B cell (primary cell): ENCODE measurements at regions of chrX and their contacts with region 1.

Region 1: DNA sequence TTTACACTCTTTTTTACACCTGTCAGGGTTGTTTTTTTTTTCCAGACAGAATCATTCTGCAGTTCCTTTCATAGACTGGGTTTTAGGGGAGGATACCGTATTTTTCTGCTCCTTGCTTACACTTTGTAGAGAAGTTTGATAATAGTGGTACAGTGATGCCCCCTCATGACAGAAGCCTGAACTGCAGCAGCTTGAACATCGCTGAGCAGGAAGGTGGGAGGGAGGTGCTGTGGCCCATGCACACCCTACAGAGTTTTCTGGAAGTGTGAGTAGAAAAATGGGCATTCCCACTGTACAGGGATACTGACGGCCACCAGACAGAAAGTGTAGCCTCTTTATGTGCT is 54.5 kb downstream of the RAB40A start:
- DNase-seq: peak; percentile 74
- ATAC-seq: peak; percentile 92
- H3K4me3 ChIP-seq: peak overlapping the region in 4 of 5 experiments; percentile 33 to 69 (median 48)
- H3K4me3 Mint-ChIP-seq: peak overlapping the region; percentile 90
- H3K27ac ChIP-seq: no peak overlapping the region
- H3K27ac Mint-ChIP-seq: no peak overlapping the region
- H3K4me1 ChIP-seq: peaks cover 0 to 3% of the 10 kb centered on the region in 2 donors
- H3K4me1 Mint-ChIP-seq: peaks cover 6% of the 10 kb centered on the region
- H3K27me3 ChIP-seq: peaks cover 0 to 10% (median 0%) of the 10 kb centered on the region in 4 experiments
- H3K27me3 Mint-ChIP-seq: peaks cover 5% of the 10 kb centered on the region
- CTCF ChIP-seq: peak; percentile 66

Region 2: GRCh38 chrX:102950908-102951866 is 513.6 kb before region 1 on chrX:
- CTCF ChIA-PET with region 1: no interaction called
- POLR2A ChIA-PET with region 1: no interaction called
- intact Hi-C with region 1: loop called (anchors 5 kb)
- DNase-seq: peak; percentile 54
- ATAC-seq: peak; percentile 70
- H3K4me3 ChIP-seq: peak overlapping the region in 2 of 5 experiments; percentile 2 to 18
- H3K4me3 Mint-ChIP-seq: peak overlapping the region; percentile 77
- H3K27ac ChIP-seq: no peak overlapping the region
- H3K27ac Mint-ChIP-seq: no peak overlapping the region
- H3K4me1 ChIP-seq: peaks cover 0 to 3% of the 10 kb centered on the region in 2 donors
- H3K4me1 Mint-ChIP-seq: peaks cover 6% of the 10 kb centered on the region
- H3K27me3 ChIP-seq: no peaks in the 10 kb centered on the region
- H3K27me3 Mint-ChIP-seq: no peaks in the 10 kb centered on the region
- CTCF ChIP-seq: peak; percentile 61

Region 3: DNA sequence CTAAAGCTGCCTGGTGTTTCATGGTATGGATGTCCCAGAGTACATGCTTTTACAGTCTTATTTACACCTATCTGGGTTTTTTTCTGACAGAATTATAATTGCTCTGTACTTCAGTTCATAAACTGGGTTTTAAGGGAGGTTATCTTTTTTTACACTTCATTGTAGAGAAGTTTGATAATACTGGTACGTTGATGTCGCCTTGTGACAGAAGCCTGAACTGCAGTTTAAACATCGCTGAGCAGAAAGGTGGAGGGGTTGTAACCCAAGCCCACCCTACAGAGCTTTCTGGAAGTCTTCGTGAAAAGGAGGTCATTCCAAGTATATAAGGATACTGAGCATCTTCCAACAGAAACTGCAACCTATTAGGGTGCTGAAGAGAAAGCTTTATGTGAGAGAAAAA is 447.2 kb before region 1 on chrX:
- CTCF ChIA-PET with region 1: no interaction called
- POLR2A ChIA-PET with region 1: no interaction called
- intact Hi-C with region 1: no loop called
- DNase-seq: no peak
- ATAC-seq: no peak
- H3K4me3 ChIP-seq: no peak overlapping the region
- H3K4me3 Mint-ChIP-seq: no peak overlapping the region
- H3K27ac ChIP-seq: no peak overlapping the region
- H3K27ac Mint-ChIP-seq: no peak overlapping the region
- H3K4me1 ChIP-seq: no peaks in the 10 kb centered on the region
- H3K4me1 Mint-ChIP-seq: no peaks in the 10 kb centered on the region
- H3K27me3 ChIP-seq: no peaks in the 10 kb centered on the region
- H3K27me3 Mint-ChIP-seq: no peaks in the 10 kb centered on the region
- CTCF ChIP-seq: no peak

Region 4: DNA sequence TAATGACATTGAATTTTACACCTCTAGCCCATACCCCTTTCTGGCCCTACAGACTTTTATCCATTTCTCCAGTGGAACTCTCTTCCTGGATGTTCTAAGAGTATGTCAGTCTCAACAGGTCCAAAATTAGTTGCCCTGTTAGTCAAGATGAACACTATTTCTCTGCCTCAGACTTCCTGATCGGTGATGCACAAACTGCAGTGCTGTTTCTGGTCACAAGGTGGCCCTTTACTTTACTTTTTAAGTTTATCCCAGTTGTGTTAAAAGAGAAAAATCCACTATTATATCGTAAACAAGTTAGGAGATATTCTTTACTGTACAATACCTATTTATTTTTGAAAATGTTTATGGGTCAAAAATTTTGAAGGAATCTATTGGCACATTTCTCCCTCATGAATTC is 121.6 kb before region 1 on chrX:
- CTCF ChIA-PET with region 1: interaction called, 6 read pairs
- POLR2A ChIA-PET with region 1: no interaction called
- intact Hi-C with region 1: loop called (anchors 1 kb)
- DNase-seq: peak; percentile 35
- ATAC-seq: peak; percentile 31
- H3K4me3 ChIP-seq: no peak overlapping the region
- H3K4me3 Mint-ChIP-seq: no peak overlapping the region
- H3K27ac ChIP-seq: no peak overlapping the region
- H3K27ac Mint-ChIP-seq: no peak overlapping the region
- H3K4me1 ChIP-seq: no peaks in the 10 kb centered on the region
- H3K4me1 Mint-ChIP-seq: no peaks in the 10 kb centered on the region
- H3K27me3 ChIP-seq: no peaks in the 10 kb centered on the region
- H3K27me3 Mint-ChIP-seq: no peaks in the 10 kb centered on the region
- CTCF ChIP-seq: peak; percentile 56